ENCODE measurements at regions of chr18 and their contacts with region 1.

Region 1: GRCh38 chr18:73842795-73843394 is 304.7 kb downstream of the FBXO15 start:
- DNase-seq: peak; percentile 43
- H3K4me3 Mint-ChIP-seq: peak overlapping the region; percentile 6
- H3K27ac Mint-ChIP-seq: no peak overlapping the region
- H3K4me1 Mint-ChIP-seq: peaks cover 8% of the 10 kb centered on the region
- H3K27me3 Mint-ChIP-seq: peaks cover 5% of the 10 kb centered on the region

Region 2: GRCh38 chr18:72762515-72763122 is 1080.3 kb before region 1 on chr18:
- CTCF ChIA-PET with region 1: interaction called, 14 read pairs
- POLR2A ChIA-PET with region 1: no interaction called
- intact Hi-C with region 1: loop called (anchors 1 kb)
- DNase-seq: no peak
- H3K4me3 Mint-ChIP-seq: no peak overlapping the region
- H3K27ac Mint-ChIP-seq: no peak overlapping the region
- H3K4me1 Mint-ChIP-seq: no peaks in the 10 kb centered on the region
- H3K27me3 Mint-ChIP-seq: no peaks in the 10 kb centered on the region

Region 3: GRCh38 chr18:73752546-73752945 is 90.3 kb before region 1 on chr18:
- CTCF ChIA-PET with region 1: no interaction called
- POLR2A ChIA-PET with region 1: no interaction called
- intact Hi-C with region 1: no loop called
- DNase-seq: no peak
- H3K4me3 Mint-ChIP-seq: no peak overlapping the region
- H3K27ac Mint-ChIP-seq: no peak overlapping the region
- H3K4me1 Mint-ChIP-seq: no peaks in the 10 kb centered on the region
- H3K27me3 Mint-ChIP-seq: no peaks in the 10 kb centered on the region

Region 4: DNA sequence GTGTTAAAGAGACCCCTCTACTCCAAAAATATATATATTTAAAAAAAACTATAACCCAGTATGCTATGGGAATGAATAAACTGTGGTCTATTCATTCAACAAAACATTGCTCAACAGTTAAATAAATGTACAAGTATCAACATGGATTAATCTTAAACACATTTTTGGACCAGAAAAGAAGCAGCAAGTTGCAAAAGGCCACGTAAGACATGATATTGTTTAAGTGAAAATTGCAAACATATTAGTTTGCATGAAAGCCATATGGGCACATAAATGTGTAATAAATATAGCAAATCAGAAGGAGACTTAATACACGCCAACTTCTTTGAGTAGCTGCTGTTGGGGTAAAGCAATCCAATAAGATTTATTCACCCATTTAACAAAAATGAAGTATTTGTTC is 16.8 kb before region 1 on chr18:
- CTCF ChIA-PET with region 1: no interaction called
- POLR2A ChIA-PET with region 1: no interaction called
- intact Hi-C with region 1: no loop called
- DNase-seq: no peak
- H3K4me3 Mint-ChIP-seq: no peak overlapping the region
- H3K27ac Mint-ChIP-seq: no peak overlapping the region
- H3K4me1 Mint-ChIP-seq: no peaks in the 10 kb centered on the region
- H3K27me3 Mint-ChIP-seq: no peaks in the 10 kb centered on the region

Region 5: GRCh38 chr18:74370115-74370514 is 527.2 kb after region 1 on chr18:
- CTCF ChIA-PET with region 1: no interaction called
- POLR2A ChIA-PET with region 1: no interaction called
- intact Hi-C with region 1: no loop called
- DNase-seq: no peak
- H3K4me3 Mint-ChIP-seq: no peak overlapping the region
- H3K27ac Mint-ChIP-seq: no peak overlapping the region
- H3K4me1 Mint-ChIP-seq: peaks cover 31% of the 10 kb centered on the region
- H3K27me3 Mint-ChIP-seq: peaks cover 5% of the 10 kb centered on the region